ENCODE measurements at regions of chr15 and their contacts with region 1.

Region 1: GRCh38 chr15:79970624-79971434 is at the start of gene BCL2A1:
- DNase-seq: peak; percentile 91
- H3K4me3 Mint-ChIP-seq: peak within 1 kb of the TSS; percentile 94
- H3K27ac Mint-ChIP-seq: peak within 1 kb of the TSS; percentile 96
- H3K4me1 Mint-ChIP-seq: peaks cover 47% of the 10 kb centered on the region
- H3K27me3 Mint-ChIP-seq: no peaks in the 10 kb centered on the region
- total RNA-seq, gene BCL2A1: 110 and 111 TPM in 2 replicates

Region 2: DNA sequence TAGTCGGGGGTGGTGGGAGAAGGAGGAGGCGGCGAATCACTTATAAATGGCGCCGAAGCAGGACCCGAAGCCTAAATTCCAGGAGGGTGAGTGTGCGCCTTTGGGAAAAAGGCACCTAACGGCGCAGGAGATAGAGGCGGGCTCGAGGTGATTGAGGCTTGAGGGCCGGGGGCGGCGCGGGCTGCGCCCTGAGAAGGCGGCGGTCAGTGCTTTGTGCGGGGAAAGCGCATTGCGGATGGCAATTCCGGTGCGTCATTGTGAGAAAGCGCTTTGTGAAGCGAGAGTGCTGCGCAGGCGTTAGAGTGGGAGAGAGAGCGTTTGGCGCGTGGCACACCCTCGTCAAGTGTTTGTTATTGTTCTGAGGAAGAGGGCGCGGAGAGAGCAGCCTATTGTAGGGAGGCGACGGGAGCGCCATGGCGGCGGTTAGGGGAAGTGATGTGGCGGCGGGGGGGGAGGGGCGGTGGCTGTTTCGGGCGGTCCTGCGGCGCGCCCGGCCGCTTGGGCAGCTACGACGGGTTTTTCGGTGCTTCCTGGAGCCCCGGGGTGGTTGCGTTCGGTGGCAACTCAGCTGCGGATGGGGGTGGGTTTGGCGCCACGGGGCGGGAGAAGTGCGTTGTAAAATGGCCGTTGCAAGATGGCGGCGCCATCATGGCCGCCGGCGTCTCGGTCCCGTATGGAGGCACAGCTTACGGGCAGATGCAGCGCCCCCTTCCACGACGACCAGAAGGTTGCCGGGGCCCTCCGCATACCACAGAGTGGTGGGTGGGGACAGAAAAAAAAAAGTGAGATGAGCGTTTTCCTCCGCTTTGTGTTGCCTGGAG is 1097.6 kb before region 1 on chr15:
- intact Hi-C with region 1: loop called (anchors 10 kb)
- DNase-seq: peak; percentile 97
- H3K4me3 Mint-ChIP-seq: peak overlapping the region; percentile 96
- H3K27ac Mint-ChIP-seq: peak overlapping the region; percentile 100
- H3K4me1 Mint-ChIP-seq: peaks cover 38% of the 10 kb centered on the region
- H3K27me3 Mint-ChIP-seq: no peaks in the 10 kb centered on the region

Region 3: DNA sequence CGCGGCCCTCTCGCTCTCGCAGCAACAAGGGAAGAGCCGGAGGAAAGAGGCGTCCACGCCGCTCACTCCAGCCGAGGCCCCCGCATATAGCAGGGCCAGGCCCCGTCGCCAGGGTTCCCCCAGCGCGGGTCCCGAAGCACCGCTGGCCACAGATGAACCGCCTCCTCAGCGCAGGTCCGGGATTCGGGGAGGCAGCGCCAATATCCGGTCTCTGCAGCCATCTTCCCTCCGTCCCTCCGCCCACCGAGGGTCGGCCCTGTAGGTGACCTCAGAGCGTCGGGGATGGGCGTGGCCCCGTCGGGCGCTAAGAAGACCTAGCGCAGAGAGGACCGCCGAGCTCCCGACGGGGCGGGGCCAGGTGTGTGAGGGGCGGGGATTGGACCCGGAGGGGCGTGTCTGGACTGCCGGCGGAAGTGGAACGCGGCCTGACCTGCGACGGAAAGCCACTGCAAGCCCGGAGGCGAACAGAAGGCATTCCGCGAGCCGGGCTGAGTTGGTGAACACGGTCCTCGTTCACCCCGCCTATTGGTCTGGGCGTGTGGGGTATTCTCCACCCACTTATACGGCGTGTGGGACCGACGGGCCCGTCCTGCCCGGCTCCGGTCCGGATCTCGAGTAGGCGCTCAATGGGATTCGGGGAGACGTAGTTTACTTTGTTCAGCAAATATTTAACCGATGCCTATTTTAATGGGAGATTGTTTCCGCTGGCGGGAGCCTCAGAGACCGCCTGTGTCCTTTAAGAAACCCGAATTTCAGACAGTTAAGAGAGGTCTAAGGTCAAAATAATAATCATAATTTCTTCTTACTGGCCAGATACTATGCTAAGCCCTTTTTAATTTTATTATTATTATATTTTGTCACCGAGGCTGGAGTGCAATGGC is 47.1 kb before region 1 on chr15:
- intact Hi-C with region 1: loop called (anchors 1 kb)
- DNase-seq: peak; percentile 100
- H3K4me3 Mint-ChIP-seq: peak overlapping the region; percentile 98
- H3K27ac Mint-ChIP-seq: peak overlapping the region; percentile 98
- H3K4me1 Mint-ChIP-seq: peaks cover 15% of the 10 kb centered on the region
- H3K27me3 Mint-ChIP-seq: no peaks in the 10 kb centered on the region

Region 4: DNA sequence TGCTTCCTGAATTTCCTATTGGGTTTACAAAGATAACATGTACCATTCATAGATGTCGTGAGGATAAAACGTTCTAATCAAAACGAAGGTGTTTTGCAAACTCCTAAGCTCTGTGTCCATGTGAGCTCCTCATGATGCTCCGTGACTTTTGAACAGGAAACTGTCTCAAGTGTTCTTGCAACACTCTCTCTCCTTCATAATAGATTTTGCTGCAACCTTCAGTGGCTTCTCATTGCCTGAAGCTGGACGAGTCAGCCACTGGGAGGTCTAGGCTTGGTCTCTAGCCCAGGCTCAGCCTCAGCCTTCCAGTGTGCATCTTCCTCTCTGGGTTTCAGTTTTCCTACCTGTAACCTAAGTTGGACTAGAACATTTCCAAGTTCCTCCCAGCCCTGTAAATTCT is 18.9 kb after region 1 on chr15:
- intact Hi-C with region 1: loop called (anchors 2 kb)
- DNase-seq: no peak
- H3K4me3 Mint-ChIP-seq: no peak overlapping the region
- H3K27ac Mint-ChIP-seq: no peak overlapping the region
- H3K4me1 Mint-ChIP-seq: peaks cover 10% of the 10 kb centered on the region
- H3K27me3 Mint-ChIP-seq: peaks cover 3% of the 10 kb centered on the region

Region 5: DNA sequence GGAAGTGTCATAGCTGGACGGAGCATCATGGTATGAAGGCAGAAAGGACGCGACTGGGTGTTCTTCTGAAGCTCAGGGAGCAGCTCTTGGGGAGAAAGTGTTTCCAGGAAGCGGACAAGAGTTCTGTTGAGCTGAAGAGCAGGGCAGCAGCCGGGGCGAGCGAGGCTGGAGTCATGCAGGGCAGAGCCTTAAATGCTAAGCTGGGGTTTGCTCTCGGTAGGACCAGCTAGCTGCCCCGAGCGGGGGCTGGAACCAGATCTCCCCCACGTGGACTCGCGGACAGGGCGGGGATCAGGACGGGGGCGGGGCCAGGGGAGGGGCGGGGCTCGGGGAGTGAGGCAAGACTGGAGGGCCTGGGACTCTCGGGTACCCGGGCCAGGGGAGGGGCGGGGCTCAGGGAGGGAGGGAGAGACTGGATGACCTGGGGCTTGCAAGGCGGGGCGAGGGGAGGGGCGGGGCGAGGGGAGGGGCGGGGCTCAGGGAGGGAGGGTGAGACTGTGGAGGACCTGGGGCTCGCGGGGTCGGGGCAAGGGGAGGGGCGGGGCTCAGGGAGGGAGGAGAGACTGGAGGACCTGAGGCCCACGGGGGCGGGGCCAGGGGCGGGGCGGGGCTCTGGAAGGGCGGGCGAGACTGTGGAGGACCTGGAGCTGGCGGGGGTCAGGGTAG is 181.5 kb after region 1 on chr15:
- intact Hi-C with region 1: loop called (anchors 2 kb)
- DNase-seq: peak; percentile 93
- H3K4me3 Mint-ChIP-seq: peak overlapping the region; percentile 97
- H3K27ac Mint-ChIP-seq: peak overlapping the region; percentile 82
- H3K4me1 Mint-ChIP-seq: peaks cover 33% of the 10 kb centered on the region
- H3K27me3 Mint-ChIP-seq: peaks cover 10% of the 10 kb centered on the region

Measured in activated CD4-positive, alpha-beta T cell treated with anti-CD3 and anti-CD28 coated beads, Interleukin-2, amount 10 ng/mL, durations not matched to agents 24 days and 14 days (primary cell).